ENCODE measurements at regions of chr5 and their contacts with region 1.

Region 1: DNA sequence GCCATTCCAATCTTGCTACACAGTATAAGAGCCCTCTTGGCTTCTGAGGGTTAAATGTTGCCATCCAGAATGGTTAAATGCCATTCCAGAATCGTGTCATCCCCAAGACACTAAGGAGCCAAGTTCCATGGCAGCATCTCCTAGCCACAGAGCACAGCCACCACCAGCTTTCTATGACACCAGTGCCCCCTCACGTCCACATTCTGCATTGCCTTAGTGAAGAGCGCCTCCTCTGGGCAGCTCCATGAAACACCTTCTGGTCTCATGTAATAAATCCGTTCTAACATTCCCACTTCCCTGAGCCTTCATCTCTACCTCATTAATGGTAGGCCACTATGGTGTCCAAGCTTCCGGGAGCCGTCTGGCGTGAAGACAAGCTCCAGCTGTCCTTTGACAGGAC is 12.4 kb downstream of the CBY3 start:
- DNase-seq: peak; percentile 78
- H3K4me3 Mint-ChIP-seq: no peak overlapping the region
- H3K27ac Mint-ChIP-seq: no peak overlapping the region
- H3K4me1 Mint-ChIP-seq: no peaks in the 10 kb centered on the region
- H3K27me3 Mint-ChIP-seq: no peaks in the 10 kb centered on the region

Region 2: GRCh38 chr5:179643556-179643955 is 24.8 kb before region 1 on chr5:
- intact Hi-C with region 1: loop called (anchors 2 kb)
- DNase-seq: no peak
- H3K4me3 Mint-ChIP-seq: no peak overlapping the region
- H3K27ac Mint-ChIP-seq: no peak overlapping the region
- H3K4me1 Mint-ChIP-seq: no peaks in the 10 kb centered on the region
- H3K27me3 Mint-ChIP-seq: peaks cover 2% of the 10 kb centered on the region

Region 3: GRCh38 chr5:179697993-179698934 is 29.9 kb after region 1 on chr5:
- intact Hi-C with region 1: no loop called
- DNase-seq: peak; percentile 100
- H3K4me3 Mint-ChIP-seq: peak overlapping the region; percentile 89
- H3K27ac Mint-ChIP-seq: peak overlapping the region; percentile 99
- H3K4me1 Mint-ChIP-seq: peaks cover 27% of the 10 kb centered on the region
- H3K27me3 Mint-ChIP-seq: no peaks in the 10 kb centered on the region